ENCODE measurements at regions of chr6 and their contacts with region 1.

Region 1: DNA sequence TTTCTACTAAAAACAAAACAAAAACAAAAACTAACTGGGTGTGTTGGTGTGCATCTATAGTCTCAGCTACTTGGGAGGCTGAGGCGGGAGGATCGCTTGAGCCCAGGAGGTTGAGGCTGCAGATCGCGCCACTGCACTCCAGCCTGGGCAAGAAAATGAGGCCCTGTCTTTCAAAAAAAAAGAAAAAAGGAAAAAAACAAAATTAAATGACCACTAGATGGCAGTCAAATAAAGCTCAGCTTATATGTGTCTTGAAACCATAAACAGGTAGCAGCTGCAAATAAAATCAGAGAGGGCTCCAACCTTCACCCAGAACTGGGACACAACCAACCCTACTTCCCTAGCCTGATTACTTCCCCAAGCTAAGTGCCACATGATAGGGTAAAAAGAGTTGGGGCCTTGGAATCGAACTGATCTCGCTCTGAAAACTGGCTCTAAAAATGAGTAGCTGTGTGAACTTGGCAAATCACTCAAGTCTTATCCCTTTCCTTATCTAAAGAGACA is 67.1 kb upstream of the ADGRF4 start:
- DNase-seq: peak in 1 of 2 experiments; percentile 23
- H3K4me3 ChIP-seq: no peak overlapping the region
- H3K27ac ChIP-seq: no peak overlapping the region
- H3K4me1 ChIP-seq: peaks cover 0 to 4% (median 0%) of the 10 kb centered on the region in 4 experiments; a peak in 1 of 7 replicates
- H3K27me3 ChIP-seq: no peaks in the 10 kb centered on the region
- CTCF ChIP-seq: peak in 2 of 3 experiments; percentile 48 to 56; a peak in 3 of 4 replicates
- EP300 ChIP-seq: no peak
- POLR2A ChIP-seq: peak in 1 of 2 experiments; percentile 27; a peak in 2 of 3 replicates
- RAD21 ChIP-seq: peak; percentile 77 to 78

Region 2: GRCh38 chr6:47413752-47414422 is 217.4 kb before region 1 on chr6:
- CTCF ChIA-PET with region 1: interaction called, 16 read pairs
- POLR2A ChIA-PET with region 1: no interaction called
- DNase-seq: no peak
- H3K4me3 ChIP-seq: no peak overlapping the region
- H3K27ac ChIP-seq: no peak overlapping the region
- H3K4me1 ChIP-seq: no peaks in the 10 kb centered on the region
- H3K27me3 ChIP-seq: peaks cover 0 to 1% (median 0%) of the 10 kb centered on the region in 4 experiments; a peak in 1 of 7 replicates
- CTCF ChIP-seq: peak in 2 of 3 experiments; percentile 62 to 92; a peak in 3 of 4 replicates
- EP300 ChIP-seq: no peak
- POLR2A ChIP-seq: no peak
- RAD21 ChIP-seq: peak; percentile 92 to 93

Region 3: GRCh38 chr6:47592131-47592840 is 39.0 kb before region 1 on chr6:
- CTCF ChIA-PET with region 1: no interaction called
- POLR2A ChIA-PET with region 1: no interaction called
- DNase-seq: no peak
- H3K4me3 ChIP-seq: no peak overlapping the region
- H3K27ac ChIP-seq: peak overlapping the region; percentile 62; the same call in 1 of the 2 replicates
- H3K4me1 ChIP-seq: no peaks in the 10 kb centered on the region
- H3K27me3 ChIP-seq: no peaks in the 10 kb centered on the region
- CTCF ChIP-seq: no peak
- EP300 ChIP-seq: no peak
- POLR2A ChIP-seq: no peak
- RAD21 ChIP-seq: no peak

Region 4: DNA sequence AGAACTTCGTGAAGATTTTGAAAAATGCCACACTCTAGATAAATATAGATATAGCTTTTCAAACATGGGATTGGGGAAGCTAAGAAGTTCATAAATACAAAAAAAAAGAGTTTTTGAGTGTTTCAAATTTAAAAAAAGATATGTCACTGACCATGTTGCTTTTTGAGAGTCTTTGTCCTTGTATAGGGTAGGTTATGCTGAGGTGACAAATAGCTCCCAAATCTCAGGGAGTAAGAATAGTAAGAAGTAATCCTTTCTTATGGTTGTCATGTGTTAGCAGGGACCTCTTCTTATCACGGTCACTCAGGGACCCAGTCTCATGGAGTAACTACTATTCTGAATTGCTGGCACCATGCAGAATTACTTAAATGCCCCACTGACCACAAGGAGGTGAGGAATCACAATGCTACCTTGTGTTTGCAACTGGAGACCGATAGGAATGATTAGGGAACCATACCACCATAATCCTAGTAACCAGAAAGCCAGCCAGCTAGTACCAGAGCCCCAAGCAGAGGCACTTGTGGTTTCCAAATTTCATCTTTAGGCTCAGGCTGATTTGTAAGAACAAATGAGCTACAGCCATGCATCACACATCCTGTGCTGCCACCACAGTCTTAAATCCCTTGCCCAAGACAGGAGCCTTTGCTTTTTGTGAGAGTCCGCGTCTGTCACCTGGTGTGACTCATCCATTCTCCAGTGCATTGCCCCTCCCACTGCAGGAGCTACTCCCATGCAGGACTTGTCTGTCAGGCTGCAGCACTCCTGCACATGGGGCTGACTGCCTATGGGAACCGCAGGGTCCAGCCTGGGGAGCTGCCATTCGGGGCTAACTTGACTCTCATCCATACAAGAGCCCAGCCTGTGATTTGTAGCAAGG is 24.6 kb after region 1 on chr6:
- CTCF ChIA-PET with region 1: interaction called, 25 read pairs
- POLR2A ChIA-PET with region 1: no interaction called
- DNase-seq: peak in 1 of 2 experiments; percentile 36
- H3K4me3 ChIP-seq: no peak overlapping the region
- H3K27ac ChIP-seq: no peak overlapping the region
- H3K4me1 ChIP-seq: peaks cover 0 to 4% (median 1%) of the 10 kb centered on the region in 4 experiments; a peak in 1 of 7 replicates
- H3K27me3 ChIP-seq: no peaks in the 10 kb centered on the region
- CTCF ChIP-seq: no peak
- EP300 ChIP-seq: no peak
- POLR2A ChIP-seq: no peak
- RAD21 ChIP-seq: no peak

Region 5: DNA sequence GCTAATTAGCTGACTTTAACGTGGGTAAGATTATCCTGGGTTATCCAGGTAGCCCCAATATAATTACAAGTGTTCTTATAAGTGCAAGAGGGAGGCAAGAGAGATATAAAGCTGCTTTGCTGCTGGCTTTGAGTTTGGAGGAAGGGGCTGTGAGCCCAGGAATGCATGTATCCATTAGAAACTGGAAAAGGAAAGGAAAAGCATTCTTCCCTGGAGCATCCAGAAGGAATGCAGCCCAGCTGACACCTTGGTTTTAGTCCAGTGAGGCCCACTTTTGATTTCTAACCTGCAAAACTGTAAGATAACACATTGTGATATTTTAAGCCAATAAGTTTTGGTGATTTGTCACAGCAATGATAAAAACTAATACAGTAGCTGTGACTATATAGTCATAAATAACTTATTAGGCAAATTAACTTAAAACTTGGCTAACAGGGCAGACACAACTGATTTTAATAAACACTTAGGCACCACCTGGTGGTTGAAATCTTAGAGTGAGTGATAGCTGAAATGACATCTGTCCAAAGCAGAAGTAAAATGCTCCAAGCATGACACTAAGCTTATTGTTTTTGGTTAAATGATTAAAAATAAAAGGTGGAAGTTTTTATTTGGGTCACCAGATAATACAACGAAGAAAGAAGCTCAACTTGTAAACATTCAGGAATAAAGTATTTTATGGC is 102.7 kb after region 1 on chr6:
- CTCF ChIA-PET with region 1: interaction called, 30 read pairs
- POLR2A ChIA-PET with region 1: no interaction called
- DNase-seq: no peak
- H3K4me3 ChIP-seq: no peak overlapping the region; a peak in 1 of 8 replicates
- H3K27ac ChIP-seq: no peak overlapping the region
- H3K4me1 ChIP-seq: peaks cover 4 to 18% (median 9%) of the 10 kb centered on the region in 4 experiments; a peak in 6 of 7 replicates
- H3K27me3 ChIP-seq: no peaks in the 10 kb centered on the region
- CTCF ChIP-seq: peak in 1 of 3 experiments; percentile 25; a peak in 2 of 4 replicates
- EP300 ChIP-seq: no peak
- POLR2A ChIP-seq: no peak
- RAD21 ChIP-seq: peak; percentile 37 to 39

Region 6: DNA sequence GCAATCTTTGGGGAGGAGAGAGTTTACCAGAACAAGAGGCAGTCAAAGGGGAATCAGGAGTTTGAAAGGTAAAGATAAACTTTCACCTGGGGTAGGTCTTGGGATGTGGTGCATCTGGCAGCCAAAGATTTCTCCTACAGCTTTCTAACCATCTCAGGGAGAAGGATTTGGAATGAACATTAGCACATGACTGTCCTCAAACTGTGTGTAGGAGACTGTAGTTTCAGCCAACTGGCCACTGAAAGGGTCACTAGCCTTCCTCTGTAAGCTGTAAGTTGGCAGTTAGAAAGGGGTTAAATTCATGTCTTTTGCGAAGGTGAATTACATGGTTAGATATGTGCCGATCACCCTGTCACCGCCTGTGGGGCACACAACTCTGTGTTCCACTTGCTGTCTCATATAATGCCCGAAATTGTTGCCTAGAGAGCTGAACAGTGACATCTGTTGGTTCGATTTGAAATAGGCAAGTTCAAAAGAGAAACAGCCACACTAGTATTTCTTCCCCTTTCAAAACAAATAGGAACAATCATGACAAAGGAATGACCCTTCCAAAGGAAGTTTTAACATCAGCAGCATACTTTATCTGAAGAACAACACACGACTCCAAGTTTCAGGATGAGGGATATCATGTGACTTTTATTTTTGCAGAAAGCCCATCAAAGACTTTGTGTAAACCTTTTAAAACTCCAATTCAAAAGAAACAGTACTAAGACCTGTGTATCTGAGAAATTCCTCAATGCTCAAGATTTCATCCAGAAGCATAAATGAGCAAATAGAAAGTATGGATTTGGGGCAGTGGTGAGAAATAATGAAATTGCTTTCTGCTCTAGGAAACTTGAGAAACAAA is 149.4 kb after region 1 on chr6:
- CTCF ChIA-PET with region 1: interaction called, 72 read pairs
- POLR2A ChIA-PET with region 1: no interaction called
- DNase-seq: peak; percentile 3 to 56
- H3K4me3 ChIP-seq: no peak overlapping the region
- H3K27ac ChIP-seq: no peak overlapping the region
- H3K4me1 ChIP-seq: no peaks in the 10 kb centered on the region
- H3K27me3 ChIP-seq: no peaks in the 10 kb centered on the region; a peak in 2 of 7 replicates
- CTCF ChIP-seq: peak in 2 of 3 experiments; percentile 67 to 69; a peak in 3 of 4 replicates
- EP300 ChIP-seq: no peak
- POLR2A ChIP-seq: no peak
- RAD21 ChIP-seq: peak; percentile 76 to 82

Region 7: GRCh38 chr6:47787620-47788497 is 156.5 kb after region 1 on chr6:
- CTCF ChIA-PET with region 1: interaction called, 21 read pairs
- POLR2A ChIA-PET with region 1: no interaction called
- DNase-seq: peak in 1 of 2 experiments; percentile 74
- H3K4me3 ChIP-seq: no peak overlapping the region
- H3K27ac ChIP-seq: no peak overlapping the region
- H3K4me1 ChIP-seq: peaks cover 0 to 7% (median 4%) of the 10 kb centered on the region in 4 experiments; a peak in 4 of 7 replicates
- H3K27me3 ChIP-seq: peaks cover 5 to 31% (median 27%) of the 10 kb centered on the region in 4 experiments; a peak in 6 of 7 replicates
- CTCF ChIP-seq: peak; percentile 89 to 96 (median 90)
- EP300 ChIP-seq: no peak
- POLR2A ChIP-seq: no peak
- RAD21 ChIP-seq: peak; percentile 98 to 99